Activated B cell treated with CpG ODN at 0.5 μM for 24 hours (primary cell): ENCODE measurements at regions of chr17 and their contacts with region 1.

Region 1: DNA sequence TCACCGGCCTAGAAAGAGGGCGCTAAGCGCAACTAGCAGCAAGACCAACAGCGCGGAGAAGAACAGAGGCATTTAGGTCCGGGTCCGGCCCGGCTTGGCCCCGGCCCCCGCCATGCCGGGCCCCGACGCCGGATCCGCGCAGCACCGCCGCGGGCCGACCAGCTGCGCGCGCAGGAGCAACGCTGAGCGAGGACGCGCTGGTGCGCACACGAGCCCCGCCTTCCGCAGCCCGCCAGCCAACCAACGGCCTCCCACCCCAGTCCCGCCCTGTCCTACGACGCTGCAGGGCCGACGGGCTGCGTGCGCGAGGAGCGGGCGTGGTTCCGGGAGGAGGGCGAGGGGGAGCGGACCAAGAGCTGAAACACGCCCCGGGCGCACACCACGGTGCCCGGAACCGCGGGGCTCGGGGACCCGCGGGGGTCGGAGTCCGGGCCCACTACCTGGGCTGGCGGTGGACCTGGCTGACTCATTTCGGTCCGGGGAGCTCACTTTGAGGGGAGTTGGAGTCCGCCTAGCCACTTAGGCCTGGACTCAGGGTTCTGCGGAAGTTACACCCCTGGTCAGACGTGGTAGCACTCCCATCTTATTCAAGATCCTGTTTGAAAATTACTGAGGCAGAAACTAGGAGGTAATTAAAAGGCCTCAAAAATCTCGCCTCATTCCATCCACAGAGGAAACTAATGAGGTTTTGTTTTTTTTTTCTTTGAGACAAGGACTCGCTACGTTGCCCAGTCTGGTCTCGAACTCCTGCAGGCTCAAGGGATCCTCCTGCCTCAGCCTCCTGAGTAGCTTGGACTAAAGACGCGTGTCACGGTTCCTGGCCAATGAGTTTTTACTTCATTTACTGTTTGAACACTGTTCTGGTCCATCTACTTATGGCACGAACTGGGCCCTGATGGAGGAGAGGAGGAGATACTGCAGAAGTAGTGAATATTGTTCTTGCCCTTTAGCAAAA is at the start of gene BLTP2:
- DNase-seq: peak; percentile 91
- ATAC-seq: peak; percentile 97
- H3K4me3 Mint-ChIP-seq: peak within 1 kb of the TSS; percentile 97
- H3K27ac Mint-ChIP-seq: peak within 1 kb of the TSS; percentile 91
- H3K4me1 Mint-ChIP-seq: peaks cover 40% of the 10 kb centered on the region
- H3K27me3 Mint-ChIP-seq: no peaks in the 10 kb centered on the region
- CTCF ChIP-seq: no peak
- total RNA-seq, gene BLTP2: 162 and 182 TPM in 2 replicates

Region 2: GRCh38 chr17:28571255-28572122 is 73.8 kb before region 1 on chr17 and contains the start of gene PIGS:
- CTCF ChIA-PET with region 1: no interaction called
- POLR2A ChIA-PET with region 1: interaction called, 21 read pairs
- intact Hi-C with region 1: loop called (anchors 2 kb)
- DNase-seq: peak; percentile 84
- ATAC-seq: peak; percentile 94
- H3K4me3 Mint-ChIP-seq: peak within 1 kb of the TSS; percentile 95
- H3K27ac Mint-ChIP-seq: peak within 1 kb of the TSS; percentile 87
- H3K4me1 Mint-ChIP-seq: peaks cover 62% of the 10 kb centered on the region
- H3K27me3 Mint-ChIP-seq: no peaks in the 10 kb centered on the region
- CTCF ChIP-seq: no peak
- total RNA-seq, gene PIGS: 86.4 and 92.2 TPM in 2 replicates

Region 3: GRCh38 chr17:28623696-28624095 is 21.6 kb before region 1 on chr17:
- CTCF ChIA-PET with region 1: interaction called, 4 read pairs
- POLR2A ChIA-PET with region 1: interaction called, 10 read pairs
- intact Hi-C with region 1: no loop called
- DNase-seq: no peak
- ATAC-seq: no peak
- H3K4me3 Mint-ChIP-seq: no peak overlapping the region
- H3K27ac Mint-ChIP-seq: no peak overlapping the region
- H3K4me1 Mint-ChIP-seq: no peaks in the 10 kb centered on the region
- H3K27me3 Mint-ChIP-seq: no peaks in the 10 kb centered on the region
- CTCF ChIP-seq: no peak

Region 4: DNA sequence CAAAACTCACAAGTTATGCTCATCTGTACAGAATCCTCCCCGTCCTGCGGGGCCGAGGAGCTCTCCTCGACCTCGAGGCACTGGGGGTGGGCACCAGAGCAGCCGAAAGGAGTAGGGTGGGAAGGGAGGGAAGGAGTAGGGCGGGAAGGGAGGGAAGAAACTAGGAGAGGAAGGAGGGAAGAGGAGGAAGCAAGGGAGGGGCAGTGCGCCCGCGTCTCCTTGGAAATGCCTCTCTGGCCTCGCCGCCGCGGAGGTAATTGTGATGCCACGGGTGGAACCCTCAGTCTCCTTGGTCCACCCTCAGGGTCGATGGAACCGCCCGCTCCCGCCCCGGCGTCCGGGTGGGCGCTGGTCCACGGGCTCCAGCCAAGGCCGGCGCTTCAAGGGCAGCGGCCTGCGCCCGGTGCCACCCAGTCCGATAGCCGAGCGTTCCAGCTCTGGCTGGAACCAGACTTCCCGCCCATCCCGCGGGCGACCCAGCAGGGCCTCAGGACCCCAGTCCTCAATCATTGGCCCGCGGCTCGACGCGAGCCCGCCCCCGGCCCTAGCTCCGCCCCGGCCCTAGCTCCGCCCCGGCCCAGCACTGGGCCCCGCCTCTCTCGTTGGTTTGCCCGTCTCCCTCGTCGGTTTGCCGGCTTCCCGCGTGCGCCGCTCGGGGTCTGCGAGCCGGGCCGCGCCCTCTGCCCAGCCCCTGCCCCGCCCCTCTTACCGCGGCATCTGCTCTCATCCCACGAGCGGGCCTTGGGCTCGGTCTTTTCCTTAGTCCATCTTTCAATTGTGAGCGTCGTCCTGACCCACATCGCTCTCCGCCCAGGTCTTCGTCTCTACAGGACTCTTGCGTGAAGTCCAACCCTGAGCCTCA is 65.8 kb after region 1 on chr17:
- CTCF ChIA-PET with region 1: interaction called, 3 read pairs
- POLR2A ChIA-PET with region 1: interaction called, 18 read pairs
- intact Hi-C with region 1: loop called (anchors 1 kb)
- DNase-seq: peak; percentile 94
- ATAC-seq: peak; percentile 89
- H3K4me3 Mint-ChIP-seq: peak overlapping the region; percentile 91
- H3K27ac Mint-ChIP-seq: peak overlapping the region; percentile 96
- H3K4me1 Mint-ChIP-seq: peaks cover 18% of the 10 kb centered on the region
- H3K27me3 Mint-ChIP-seq: no peaks in the 10 kb centered on the region
- CTCF ChIP-seq: no peak

Region 5: DNA sequence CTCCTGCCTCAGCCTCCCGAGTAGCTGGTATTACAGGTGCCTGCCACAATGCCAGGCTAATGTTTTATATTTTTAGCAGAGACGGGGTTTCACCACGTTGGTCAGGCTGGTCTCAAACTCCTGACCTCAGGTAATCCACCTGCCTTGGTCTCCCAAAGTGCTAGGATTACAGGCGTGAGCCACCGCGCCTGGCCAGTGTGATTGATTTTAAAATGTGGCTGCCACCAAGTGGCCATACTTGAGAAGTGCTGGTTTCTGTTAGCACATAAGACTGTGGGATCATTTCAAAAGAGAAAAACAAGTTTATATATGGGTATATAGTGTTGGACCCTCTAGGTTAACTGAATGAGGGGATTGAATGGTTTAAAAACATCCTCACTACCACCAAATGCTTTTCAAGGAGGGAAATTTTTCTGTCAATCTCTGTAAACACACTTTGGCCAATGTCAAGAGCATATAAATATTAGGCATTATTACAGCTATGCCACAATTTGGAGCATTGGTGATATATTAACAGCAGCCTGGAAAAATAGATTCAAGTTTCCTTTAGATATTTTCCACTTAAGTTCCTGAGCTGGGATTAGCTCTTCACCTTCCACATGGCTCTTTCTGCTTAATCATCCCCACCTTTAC is 271.2 kb after region 1 on chr17:
- CTCF ChIA-PET with region 1: interaction called, 10 read pairs
- POLR2A ChIA-PET with region 1: no interaction called
- intact Hi-C with region 1: loop called (anchors 1 kb)
- DNase-seq: no peak
- ATAC-seq: peak; percentile 90
- H3K4me3 Mint-ChIP-seq: no peak overlapping the region
- H3K27ac Mint-ChIP-seq: peak overlapping the region; percentile 35
- H3K4me1 Mint-ChIP-seq: no peaks in the 10 kb centered on the region
- H3K27me3 Mint-ChIP-seq: no peaks in the 10 kb centered on the region
- CTCF ChIP-seq: peak; percentile 52